ENCODE measurements at regions of chr3 and their contacts with region 1.

Region 1: GRCh38 chr3:188947401-188948280 is 224.1 kb upstream of the TPRG1 start:
- DNase-seq: peak; percentile 84
- H3K4me3 ChIP-seq: peak overlapping the region in 2 of 3 experiments; percentile 27 to 32
- H3K27ac ChIP-seq: peak overlapping the region; percentile 97
- H3K4me1 ChIP-seq: peaks cover 45% of the 10 kb centered on the region
- H3K27me3 ChIP-seq: no peaks in the 10 kb centered on the region
- CTCF ChIP-seq: peak; percentile 19 to 29
- POLR2A ChIP-seq: no peak

Region 2: GRCh38 chr3:188348435-188349244 is 599.0 kb before region 1 on chr3:
- CTCF ChIA-PET with region 1: no interaction called
- POLR2A ChIA-PET with region 1: no interaction called
- dilution Hi-C with region 1: no loop called
- intact Hi-C with region 1: loop called (anchors 2 kb)
- DNase-seq: peak; percentile 88
- H3K4me3 ChIP-seq: no peak overlapping the region
- H3K27ac ChIP-seq: peak overlapping the region; percentile 62
- H3K4me1 ChIP-seq: peaks cover 28% of the 10 kb centered on the region
- H3K27me3 ChIP-seq: no peaks in the 10 kb centered on the region
- CTCF ChIP-seq: no peak
- POLR2A ChIP-seq: no peak

Region 3: GRCh38 chr3:188594139-188594538 is 353.5 kb before region 1 on chr3:
- CTCF ChIA-PET with region 1: interaction called, 6 read pairs
- POLR2A ChIA-PET with region 1: no interaction called
- dilution Hi-C with region 1: no loop called
- intact Hi-C with region 1: loop called (anchors 2 kb)
- DNase-seq: peak; percentile 86
- H3K4me3 ChIP-seq: no peak overlapping the region
- H3K27ac ChIP-seq: peak overlapping the region; percentile 50
- H3K4me1 ChIP-seq: peaks cover 25% of the 10 kb centered on the region
- H3K27me3 ChIP-seq: no peaks in the 10 kb centered on the region
- CTCF ChIP-seq: no peak
- POLR2A ChIP-seq: no peak

Region 4: GRCh38 chr3:188900421-188900951 is 47.2 kb before region 1 on chr3:
- CTCF ChIA-PET with region 1: interaction called, 15 read pairs
- POLR2A ChIA-PET with region 1: no interaction called
- dilution Hi-C with region 1: no loop called
- intact Hi-C with region 1: loop called (anchors 1 kb)
- DNase-seq: peak; percentile 94
- H3K4me3 ChIP-seq: peak overlapping the region in 1 of 3 experiments; percentile 35
- H3K27ac ChIP-seq: peak overlapping the region; percentile 100
- H3K4me1 ChIP-seq: peaks cover 37% of the 10 kb centered on the region
- H3K27me3 ChIP-seq: no peaks in the 10 kb centered on the region
- CTCF ChIP-seq: no peak
- POLR2A ChIP-seq: no peak

Region 5: DNA sequence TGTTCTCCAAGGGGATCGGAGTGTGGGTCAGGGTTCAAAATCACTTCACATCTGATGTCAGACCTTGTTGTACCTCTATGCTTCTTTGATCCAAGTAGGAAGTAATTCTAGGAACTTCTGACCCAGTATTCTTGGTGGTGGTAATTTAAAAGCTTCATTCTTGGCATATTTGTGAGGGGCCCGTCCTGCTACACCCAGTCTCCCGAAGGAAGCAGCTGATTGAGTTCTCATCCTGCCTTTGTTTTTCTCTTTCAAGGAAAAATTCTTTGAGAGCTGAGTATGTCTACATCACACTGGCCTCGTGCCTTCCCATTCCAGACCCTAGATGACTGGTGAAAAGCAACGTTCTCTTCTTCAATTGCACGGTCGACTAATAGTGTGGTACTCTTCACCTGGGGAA is 10.3 kb before region 1 on chr3:
- CTCF ChIA-PET with region 1: interaction called, 20 read pairs
- POLR2A ChIA-PET with region 1: interaction called, 6 read pairs
- dilution Hi-C with region 1: no loop called
- intact Hi-C with region 1: loop called (anchors 1 kb)
- DNase-seq: peak; percentile 90
- H3K4me3 ChIP-seq: no peak overlapping the region
- H3K27ac ChIP-seq: no peak overlapping the region
- H3K4me1 ChIP-seq: peaks cover 18% of the 10 kb centered on the region
- H3K27me3 ChIP-seq: no peaks in the 10 kb centered on the region
- CTCF ChIP-seq: no peak
- POLR2A ChIP-seq: no peak